BJ (cell line): ENCODE measurements at regions of chr18 and their contacts with region 1.

Region 1: GRCh38 chr18:35029770-35030169 is 11.4 kb upstream of the MAPRE2 start:
- DNase-seq: no peak
- H3K4me3 ChIP-seq: no peak overlapping the region
- H3K27me3 ChIP-seq: no peaks in the 10 kb centered on the region
- CTCF ChIP-seq: no peak

Region 2: DNA sequence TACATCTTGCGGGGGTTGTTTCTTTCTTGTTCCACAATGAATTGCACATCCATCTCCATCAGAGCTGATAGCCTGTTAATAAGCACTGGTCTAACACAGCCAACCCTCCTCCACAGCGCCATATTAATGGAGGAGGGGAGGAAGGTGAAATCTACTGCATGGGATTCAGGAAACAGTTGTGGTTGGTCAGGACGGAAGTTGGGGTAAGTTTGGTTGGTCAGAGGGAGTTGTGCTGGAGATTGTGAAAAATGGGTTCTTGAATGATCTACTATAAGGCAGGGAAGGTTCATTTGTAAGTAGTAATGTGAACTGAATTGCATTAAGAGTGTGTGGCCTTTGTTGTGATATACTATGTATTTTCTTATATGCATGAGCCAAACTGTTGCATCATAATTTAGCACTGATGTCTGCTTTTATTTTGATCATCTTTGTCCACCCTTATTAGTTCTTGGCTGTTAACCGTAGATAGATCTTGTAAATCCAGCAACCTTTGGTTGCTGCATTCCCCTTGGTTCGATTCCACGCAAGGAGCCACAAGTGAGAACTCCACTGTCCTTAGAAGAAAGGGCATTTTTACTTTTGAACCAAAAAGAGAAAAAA is 139.2 kb before region 1 on chr18:
- CTCF ChIA-PET with region 1: no interaction called
- POLR2A ChIA-PET with region 1: no interaction called
- DNase-seq: no peak
- H3K4me3 ChIP-seq: no peak overlapping the region
- H3K27me3 ChIP-seq: no peaks in the 10 kb centered on the region
- CTCF ChIP-seq: no peak

Region 3: DNA sequence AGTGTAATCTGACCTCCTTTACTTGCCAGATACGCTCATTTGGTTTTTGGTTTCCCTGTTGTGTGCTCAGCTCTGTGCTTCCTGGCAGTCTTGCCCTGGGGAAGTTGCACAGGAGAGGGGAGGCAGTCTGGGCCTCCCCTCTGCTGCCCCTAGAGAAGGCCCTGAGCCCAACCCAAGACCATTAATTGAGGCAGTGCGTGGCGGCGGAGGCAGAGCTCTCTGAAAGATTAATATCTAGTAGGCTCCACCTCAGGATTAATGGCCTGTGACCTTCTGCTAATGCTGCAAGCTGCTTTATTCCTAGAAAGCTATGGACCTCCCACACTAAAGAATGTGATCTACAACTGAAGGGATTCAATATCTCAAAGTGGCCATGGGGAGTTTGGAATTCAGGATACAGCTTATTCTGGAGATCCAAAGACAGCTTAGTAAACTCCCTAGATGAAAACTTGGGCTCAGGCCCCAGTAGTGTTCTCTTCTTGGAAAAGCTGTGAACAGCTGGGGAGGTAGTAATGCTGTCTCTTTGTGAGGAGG is 29.9 kb before region 1 on chr18:
- CTCF ChIA-PET with region 1: no interaction called
- POLR2A ChIA-PET with region 1: no interaction called
- DNase-seq: no peak
- H3K4me3 ChIP-seq: no peak overlapping the region
- H3K27me3 ChIP-seq: no peaks in the 10 kb centered on the region
- CTCF ChIP-seq: no peak

Region 4: GRCh38 chr18:35040988-35041814 is 11.4 kb after region 1 on chr18 and contains the start of gene MAPRE2:
- CTCF ChIA-PET with region 1: interaction called, 27 read pairs
- POLR2A ChIA-PET with region 1: interaction called, 4 read pairs
- DNase-seq: peak; percentile 67
- H3K4me3 ChIP-seq: peak within 1 kb of the TSS; percentile 92
- H3K27me3 ChIP-seq: no peaks in the 10 kb centered on the region
- CTCF ChIP-seq: no peak
- polyA plus RNA-seq, gene MAPRE2: 23.8 and 24.1 TPM in 2 replicates

Region 5: GRCh38 chr18:35063875-35064690 is 34.3 kb after region 1 on chr18:
- CTCF ChIA-PET with region 1: interaction called, 3 read pairs
- POLR2A ChIA-PET with region 1: interaction called, 16 read pairs
- DNase-seq: no peak
- H3K4me3 ChIP-seq: no peak overlapping the region
- H3K27me3 ChIP-seq: no peaks in the 10 kb centered on the region
- CTCF ChIP-seq: no peak

Region 6: DNA sequence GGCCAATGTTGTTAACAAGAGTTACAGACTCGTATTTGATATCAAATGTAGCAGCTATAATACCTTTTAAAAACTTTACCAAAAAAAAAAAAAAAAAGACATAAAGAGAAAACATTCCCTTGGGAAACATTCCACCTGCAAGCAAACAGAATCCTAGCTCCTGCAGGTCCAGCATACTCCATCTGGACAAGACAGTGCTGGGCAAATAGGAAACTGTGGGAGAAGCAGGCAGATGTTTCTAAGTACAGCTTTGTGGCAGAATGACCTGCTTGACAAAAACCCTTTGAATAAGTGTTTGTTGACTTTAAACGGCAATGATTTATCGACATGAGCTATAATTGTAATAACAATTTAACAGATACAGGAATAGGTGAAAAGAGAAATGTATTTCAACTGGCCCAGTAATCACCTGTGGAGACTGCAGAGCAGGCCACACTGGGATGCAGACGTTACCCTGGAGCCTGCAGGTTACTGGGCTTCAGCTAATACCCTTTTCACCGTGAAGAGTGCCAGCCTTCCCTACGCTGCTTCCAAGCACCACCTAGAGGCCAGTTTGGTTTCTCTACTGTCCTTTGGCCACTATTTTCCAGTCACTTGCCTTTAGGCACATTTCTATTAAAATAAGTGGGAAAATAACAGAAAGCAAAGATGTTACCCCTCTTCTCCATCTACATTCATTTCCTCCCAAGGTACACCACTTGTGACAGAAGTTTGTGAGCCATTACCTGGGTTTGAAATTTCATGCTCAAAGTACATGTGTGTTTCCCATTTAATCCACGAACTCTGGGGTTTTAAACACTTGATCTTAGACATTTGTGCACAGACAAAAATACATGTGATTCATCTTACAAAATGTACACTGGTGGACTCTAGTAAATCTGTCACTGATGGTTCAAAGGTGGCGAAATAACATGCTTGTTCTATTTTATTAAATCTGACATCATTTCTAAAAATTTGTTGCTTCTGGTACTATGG is 114.1 kb after region 1 on chr18:
- CTCF ChIA-PET with region 1: interaction called, 14 read pairs
- POLR2A ChIA-PET with region 1: no interaction called
- DNase-seq: no peak
- H3K4me3 ChIP-seq: no peak overlapping the region
- H3K27me3 ChIP-seq: no peaks in the 10 kb centered on the region
- CTCF ChIP-seq: peak; percentile 87